Motor neuron (in vitro differentiated cells): ENCODE measurements at regions of chr12 and their contacts with region 1.

Region 1: GRCh38 chr12:125861299-125862281 is 796.4 kb downstream of the AACS start:
- ATAC-seq: peak in 1 of 8 experiments; percentile 72
- H3K4me3 ChIP-seq: no peak overlapping the region
- H3K27ac ChIP-seq: no peak overlapping the region
- H3K4me1 ChIP-seq: no peaks in the 10 kb centered on the region

Region 2: DNA sequence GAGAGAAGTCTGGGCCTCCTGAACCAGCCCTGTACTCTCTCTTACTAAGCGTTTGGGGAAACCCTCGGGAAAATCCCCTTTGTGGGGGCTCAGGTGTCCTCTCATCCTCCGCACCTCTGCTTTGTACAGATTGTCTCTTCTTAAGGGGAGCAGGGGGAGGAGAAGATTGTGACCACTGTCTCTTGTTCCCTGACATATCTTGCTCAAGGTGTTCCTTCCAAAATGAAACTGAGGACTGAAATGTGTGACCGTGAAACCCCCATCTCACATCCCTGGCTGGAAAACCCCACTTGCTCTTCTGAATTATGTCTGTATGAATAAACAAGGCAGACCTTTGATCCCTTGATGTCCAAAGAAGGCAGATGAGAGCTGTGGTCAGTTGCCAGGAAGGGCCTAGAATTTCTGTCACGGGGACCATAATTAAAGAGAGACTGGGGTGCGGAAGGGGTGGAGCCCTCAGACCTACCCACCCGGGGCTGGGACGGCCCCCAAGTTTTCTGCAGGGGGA is 426.6 kb before region 1 on chr12:
- in situ Hi-C with region 1: no loop called
- ATAC-seq: no peak
- H3K4me3 ChIP-seq: no peak overlapping the region
- H3K27ac ChIP-seq: no peak overlapping the region
- H3K4me1 ChIP-seq: no peaks in the 10 kb centered on the region

Region 3: GRCh38 chr12:125954362-125954761 is 92.8 kb after region 1 on chr12:
- in situ Hi-C with region 1: loop called in 1 of 9 experiments (anchors 25 kb)
- ATAC-seq: no peak
- H3K4me3 ChIP-seq: no peak overlapping the region
- H3K27ac ChIP-seq: no peak overlapping the region
- H3K4me1 ChIP-seq: no peaks in the 10 kb centered on the region